Cardiac septum (tissue), 1 donor: ENCODE measurements at regions of chr5 and their contacts with region 1.

Region 1: DNA sequence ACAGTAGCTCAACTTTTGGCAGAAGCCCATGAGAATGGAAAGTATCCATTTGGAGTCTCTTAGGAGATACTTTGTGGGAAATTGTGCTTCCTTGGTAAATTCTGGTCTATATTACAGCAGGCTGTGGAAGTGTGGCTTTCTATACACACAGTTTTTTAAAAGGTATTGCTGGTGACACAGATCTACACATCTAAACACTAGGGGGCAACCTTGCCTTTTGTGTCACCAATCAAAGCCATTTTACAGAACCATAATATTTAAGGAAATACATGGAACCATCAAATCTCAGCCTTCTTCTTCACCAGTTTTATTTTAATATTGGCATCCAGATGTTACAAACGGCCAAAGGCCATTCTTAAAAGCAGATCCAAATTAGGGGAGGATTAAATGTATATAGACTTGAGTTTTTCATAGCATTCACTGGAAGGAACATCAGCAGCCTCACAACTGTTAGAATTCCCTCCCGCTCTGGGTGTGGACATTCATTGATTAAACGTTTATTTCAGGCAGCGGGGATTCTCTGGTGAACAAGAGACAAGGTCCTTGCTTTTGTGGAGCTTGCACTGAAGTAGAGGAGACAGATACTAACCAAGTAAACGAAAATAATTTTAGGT is 132.4 kb upstream of the EPB41L4A start:
- DNase-seq: no peak

Region 2: DNA sequence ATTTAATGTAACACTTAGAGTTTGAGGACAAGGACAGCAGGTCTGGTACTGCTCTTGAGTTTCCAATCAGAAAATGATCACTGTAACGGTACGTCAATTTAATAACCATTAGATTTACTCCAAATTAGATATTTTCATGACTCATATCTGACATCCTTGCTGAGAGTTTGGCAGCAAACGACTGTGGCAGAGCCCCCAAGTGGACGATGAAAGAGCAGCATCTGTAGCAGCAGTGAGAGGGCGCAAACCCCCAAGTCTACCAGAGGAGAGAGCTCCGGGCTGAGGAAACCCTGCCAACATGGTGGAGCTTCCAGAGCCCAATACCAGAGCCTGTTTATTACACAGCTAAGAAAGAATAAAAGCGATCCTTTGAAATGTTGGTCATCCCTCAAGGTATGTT is 59.2 kb before region 1 on chr5:
- intact Hi-C with region 1: no loop called
- DNase-seq: no peak

Region 3: DNA sequence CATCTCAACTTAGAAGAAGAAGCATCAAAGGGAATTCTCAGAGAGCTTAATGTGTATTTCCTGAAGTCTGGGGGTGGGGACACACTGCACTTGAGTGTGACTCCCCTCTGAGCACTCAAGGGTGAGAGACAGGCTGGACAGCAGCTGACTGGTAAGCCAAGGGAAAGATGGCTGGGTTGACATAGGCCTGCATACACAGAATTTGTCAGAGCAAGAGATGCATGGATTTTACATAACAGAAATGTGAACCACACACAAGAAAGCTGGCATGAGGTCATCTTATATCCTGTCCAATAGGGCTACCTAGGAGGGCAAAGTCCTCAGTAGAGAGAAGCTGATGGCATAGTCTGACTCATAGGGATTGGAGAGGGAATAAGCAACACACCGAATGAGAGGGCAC is 18.2 kb before region 1 on chr5:
- intact Hi-C with region 1: no loop called
- DNase-seq: no peak

Region 4: GRCh38 chr5:112628219-112628980 is 76.9 kb after region 1 on chr5:
- intact Hi-C with region 1: loop called (anchors 5 kb)
- DNase-seq: no peak

Region 5: DNA sequence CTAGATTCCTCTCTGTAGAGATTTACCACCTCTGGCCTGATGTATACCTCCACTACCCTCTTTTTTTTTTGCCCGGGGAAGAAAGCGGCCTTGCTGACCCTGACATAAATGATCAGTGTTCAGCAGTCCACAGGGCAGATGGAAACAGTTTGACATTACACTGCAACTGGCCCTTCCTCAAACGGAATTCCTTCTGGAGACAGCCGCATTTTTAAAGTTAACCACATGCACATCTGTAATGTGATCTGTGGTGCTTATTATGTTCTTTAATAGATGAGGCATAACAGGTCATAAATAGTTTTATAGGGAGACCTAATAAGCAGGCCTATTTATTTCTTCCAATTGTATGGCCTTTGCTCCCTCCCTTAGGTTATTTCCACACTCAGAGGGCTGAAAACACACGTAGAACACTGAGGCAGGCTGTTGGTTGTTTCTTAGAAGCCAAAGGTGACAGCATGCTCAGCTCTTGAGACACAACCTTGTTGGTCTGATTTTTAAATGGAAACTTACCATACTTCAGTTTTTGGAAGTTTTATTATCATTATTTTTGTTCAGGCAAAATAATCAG is 102.2 kb after region 1 on chr5:
- intact Hi-C with region 1: no loop called
- DNase-seq: no peak

Region 6: GRCh38 chr5:112684737-112685136 is 133.2 kb after region 1 on chr5:
- intact Hi-C with region 1: loop called (anchors 10 kb)
- DNase-seq: no peak

Region 7: DNA sequence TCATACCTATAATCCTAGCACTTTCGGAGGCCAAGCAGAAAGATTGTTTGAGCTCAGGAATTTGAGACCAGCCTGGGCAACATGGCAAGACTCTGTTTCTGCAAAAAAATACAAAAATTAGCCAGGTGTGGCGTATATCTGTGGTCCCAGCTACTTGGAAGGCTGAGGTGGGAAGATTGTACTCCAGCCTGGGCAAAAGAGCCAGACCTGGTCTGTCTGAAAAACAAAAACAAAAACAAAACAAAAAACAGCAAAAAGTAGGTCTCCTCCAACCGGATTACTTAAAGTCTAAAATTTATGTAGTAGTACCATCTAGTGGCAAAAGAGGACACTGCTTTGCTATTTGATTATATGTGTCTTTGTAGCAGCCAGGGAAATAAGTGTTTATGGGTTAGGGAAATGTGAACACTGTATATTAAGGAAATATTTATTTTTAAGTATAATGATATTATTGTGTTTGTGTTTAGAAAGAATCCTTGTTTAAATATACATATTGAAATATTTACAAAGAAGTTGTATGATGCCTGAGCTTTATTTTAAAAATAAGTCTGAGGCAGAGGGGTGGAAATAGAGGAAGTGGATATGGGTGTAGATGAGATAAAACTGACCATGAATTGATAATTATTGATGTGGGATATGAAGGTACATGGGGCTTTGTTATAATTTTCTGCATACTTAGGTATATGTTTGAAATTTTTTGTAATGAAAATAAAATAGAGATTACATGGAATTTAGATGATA is 206.1 kb after region 1 on chr5:
- intact Hi-C with region 1: loop called (anchors 1 kb)
- DNase-seq: no peak

Region 8: GRCh38 chr5:112848116-112848811 is 296.7 kb after region 1 on chr5:
- intact Hi-C with region 1: loop called (anchors 5 kb)
- DNase-seq: no peak

Region 9: GRCh38 chr5:112921833-112922817 is 370.6 kb after region 1 on chr5 and contains the start of gene REEP5:
- intact Hi-C with region 1: loop called (anchors 5 kb)
- DNase-seq: peak; percentile 91
- total RNA-seq, gene REEP5: 119 TPM